ENCODE measurements at regions of chr4 and their contacts with region 1.

Region 1: GRCh38 chr4:76949276-76950051 is at the start of gene SEPTIN11:
- DNase-seq: peak; percentile 77
- ATAC-seq: peak; percentile 76
- H3K4me3 Mint-ChIP-seq: peak within 1 kb of the TSS; percentile 90
- H3K27ac Mint-ChIP-seq: peak within 1 kb of the TSS; percentile 68
- H3K4me1 Mint-ChIP-seq: peaks cover 15% of the 10 kb centered on the region
- H3K27me3 Mint-ChIP-seq: no peaks in the 10 kb centered on the region
- CTCF ChIP-seq: no peak
- total RNA-seq, gene SEPTIN11: 22.3 and 22.4 TPM in 2 replicates

Region 2: GRCh38 chr4:76984127-76984526 is 34.7 kb after region 1 on chr4:
- CTCF ChIA-PET with region 1: no interaction called
- POLR2A ChIA-PET with region 1: no interaction called
- intact Hi-C with region 1: loop called (anchors 2 kb)
- DNase-seq: no peak
- ATAC-seq: no peak
- H3K4me3 Mint-ChIP-seq: no peak overlapping the region
- H3K27ac Mint-ChIP-seq: no peak overlapping the region
- H3K4me1 Mint-ChIP-seq: peaks cover 6% of the 10 kb centered on the region
- H3K27me3 Mint-ChIP-seq: no peaks in the 10 kb centered on the region
- CTCF ChIP-seq: no peak

Region 3: DNA sequence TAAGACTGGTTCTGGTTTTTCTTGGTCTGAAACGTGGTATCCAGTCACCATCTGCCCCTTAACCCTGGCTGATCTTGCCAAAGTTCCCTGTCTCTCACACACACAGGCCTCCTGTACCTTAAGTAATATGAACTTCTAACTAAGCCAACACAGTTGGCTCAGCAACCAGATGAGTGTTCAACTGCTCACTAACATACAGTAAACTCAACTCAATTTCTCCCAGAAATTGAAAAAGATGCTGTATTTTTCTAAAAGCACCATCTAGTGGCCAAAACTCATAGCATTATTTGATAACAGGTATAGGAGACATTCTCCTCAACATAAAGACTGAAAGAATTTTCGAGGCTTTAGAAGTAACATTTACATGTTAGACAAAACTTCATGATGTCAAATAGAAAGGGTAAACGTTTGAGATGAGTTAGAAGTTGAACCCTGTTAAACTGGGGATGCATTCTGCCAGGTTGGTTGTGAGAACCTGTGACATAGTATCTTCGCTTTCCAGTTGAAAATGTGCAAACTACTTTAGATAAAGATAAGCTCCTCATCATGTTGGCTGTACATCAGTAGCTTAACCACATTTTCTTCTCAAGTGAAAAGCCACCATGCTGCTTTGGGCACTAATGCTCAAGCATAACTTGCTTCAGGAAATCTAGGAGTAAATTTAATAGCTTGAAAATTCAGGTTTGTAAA is 95.1 kb after region 1 on chr4:
- CTCF ChIA-PET with region 1: no interaction called
- POLR2A ChIA-PET with region 1: no interaction called
- intact Hi-C with region 1: loop called (anchors 10 kb)
- DNase-seq: no peak
- ATAC-seq: no peak
- H3K4me3 Mint-ChIP-seq: no peak overlapping the region
- H3K27ac Mint-ChIP-seq: no peak overlapping the region
- H3K4me1 Mint-ChIP-seq: peaks cover 17% of the 10 kb centered on the region
- H3K27me3 Mint-ChIP-seq: no peaks in the 10 kb centered on the region
- CTCF ChIP-seq: peak; percentile 31

Measured in activated B cell treated with CpG ODN at 0.5 μM for 24 hours (primary cell).